MCF 10A (cell line): ENCODE measurements at regions of chrX and their contacts with region 1.

Region 1: GRCh38 chrX:149145845-149146285 is 359.2 kb downstream of the IDS start:
- DNase-seq: peak; percentile 16
- H3K4me3 Mint-ChIP-seq: no peak overlapping the region
- H3K27ac Mint-ChIP-seq: no peak overlapping the region
- H3K4me1 Mint-ChIP-seq: no peaks in the 10 kb centered on the region
- H3K27me3 Mint-ChIP-seq: no peaks in the 10 kb centered on the region
- CTCF ChIP-seq: no peak

Region 2: GRCh38 chrX:148049441-148049840 is 1096.4 kb before region 1 on chrX:
- CTCF ChIA-PET with region 1: no interaction called
- POLR2A ChIA-PET with region 1: no interaction called
- intact Hi-C with region 1: loop called (anchors 5 kb)
- DNase-seq: peak; percentile 38
- H3K4me3 Mint-ChIP-seq: no peak overlapping the region
- H3K27ac Mint-ChIP-seq: no peak overlapping the region
- H3K4me1 Mint-ChIP-seq: no peaks in the 10 kb centered on the region
- H3K27me3 Mint-ChIP-seq: no peaks in the 10 kb centered on the region
- CTCF ChIP-seq: peak; percentile 42

Region 3: GRCh38 chrX:149131774-149132173 is 14.1 kb before region 1 on chrX:
- CTCF ChIA-PET with region 1: no interaction called
- POLR2A ChIA-PET with region 1: no interaction called
- intact Hi-C with region 1: no loop called
- DNase-seq: peak; percentile 28
- H3K4me3 Mint-ChIP-seq: no peak overlapping the region
- H3K27ac Mint-ChIP-seq: no peak overlapping the region
- H3K4me1 Mint-ChIP-seq: no peaks in the 10 kb centered on the region
- H3K27me3 Mint-ChIP-seq: no peaks in the 10 kb centered on the region
- CTCF ChIP-seq: no peak

Region 4: GRCh38 chrX:149433051-149433450 is 287.2 kb after region 1 on chrX:
- CTCF ChIA-PET with region 1: no interaction called
- POLR2A ChIA-PET with region 1: no interaction called
- intact Hi-C with region 1: no loop called
- DNase-seq: no peak
- H3K4me3 Mint-ChIP-seq: no peak overlapping the region
- H3K27ac Mint-ChIP-seq: no peak overlapping the region
- H3K4me1 Mint-ChIP-seq: no peaks in the 10 kb centered on the region
- H3K27me3 Mint-ChIP-seq: no peaks in the 10 kb centered on the region
- CTCF ChIP-seq: no peak

Region 5: DNA sequence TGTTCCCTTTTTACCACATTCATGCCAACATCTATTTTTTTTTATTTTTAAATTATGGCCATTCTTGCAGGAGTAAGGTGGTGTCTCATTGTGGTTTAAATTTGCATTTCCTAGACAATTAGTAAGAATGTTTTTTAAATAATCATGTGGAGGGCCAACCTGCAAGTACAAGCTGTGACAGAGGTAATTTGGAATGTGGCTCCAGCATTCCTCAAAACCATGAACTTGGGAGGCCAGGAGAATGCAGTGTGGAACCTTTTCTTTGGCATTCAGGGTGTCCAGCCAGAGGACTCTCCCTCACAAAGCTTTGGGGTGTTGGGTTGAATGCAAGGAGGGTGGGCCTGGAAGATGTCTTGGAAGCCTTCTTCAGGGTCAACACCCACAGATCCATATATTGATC is 493.0 kb after region 1 on chrX:
- CTCF ChIA-PET with region 1: no interaction called
- POLR2A ChIA-PET with region 1: no interaction called
- intact Hi-C with region 1: no loop called
- DNase-seq: no peak
- H3K4me3 Mint-ChIP-seq: no peak overlapping the region
- H3K27ac Mint-ChIP-seq: no peak overlapping the region
- H3K4me1 Mint-ChIP-seq: no peaks in the 10 kb centered on the region
- H3K27me3 Mint-ChIP-seq: no peaks in the 10 kb centered on the region
- CTCF ChIP-seq: no peak